ENCODE measurements at regions of chr2 and their contacts with region 1.

Region 1: DNA sequence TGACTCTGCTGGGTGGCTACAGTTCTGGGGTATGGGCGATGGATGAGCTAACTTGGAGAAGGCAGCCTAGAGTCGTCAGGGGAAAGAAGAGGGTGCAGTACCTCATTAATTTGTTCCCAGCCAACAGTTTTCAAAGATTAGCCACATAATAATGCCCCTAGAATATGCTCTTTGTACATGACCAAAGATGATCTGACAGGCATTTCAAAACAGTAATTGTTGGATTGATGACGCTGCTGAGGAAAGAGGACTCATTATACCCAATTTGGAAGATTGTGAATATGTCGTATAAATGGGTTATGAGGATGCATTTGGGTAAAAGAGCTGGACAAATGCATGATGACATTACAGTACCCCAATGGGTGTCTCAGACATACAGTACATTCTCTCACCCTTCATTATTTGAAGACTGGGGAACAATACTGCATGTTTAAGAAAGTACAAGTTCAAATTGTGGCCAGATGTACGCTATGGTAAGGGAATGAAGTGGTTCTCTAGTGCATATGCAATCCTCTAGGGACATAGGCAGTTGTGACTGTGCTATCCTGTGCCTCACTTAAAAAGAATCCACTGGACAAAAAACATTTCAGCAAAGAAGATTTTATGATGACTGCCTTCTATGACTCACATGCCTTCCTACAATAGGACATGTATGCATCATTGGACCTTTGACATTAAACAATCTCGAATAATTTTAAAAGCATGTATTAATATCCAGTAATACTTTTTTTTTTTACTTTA is 233.2 kb downstream of the CNTNAP5 start:
- DNase-seq: no peak
- H3K4me3 ChIP-seq: no peak overlapping the region
- H3K27ac ChIP-seq: no peak overlapping the region
- H3K4me1 ChIP-seq: no peaks in the 10 kb centered on the region
- H3K27me3 ChIP-seq: no peaks in the 10 kb centered on the region
- CTCF ChIP-seq: no peak
- EP300 ChIP-seq: no peak
- POLR2A ChIP-seq: no peak

Region 2: DNA sequence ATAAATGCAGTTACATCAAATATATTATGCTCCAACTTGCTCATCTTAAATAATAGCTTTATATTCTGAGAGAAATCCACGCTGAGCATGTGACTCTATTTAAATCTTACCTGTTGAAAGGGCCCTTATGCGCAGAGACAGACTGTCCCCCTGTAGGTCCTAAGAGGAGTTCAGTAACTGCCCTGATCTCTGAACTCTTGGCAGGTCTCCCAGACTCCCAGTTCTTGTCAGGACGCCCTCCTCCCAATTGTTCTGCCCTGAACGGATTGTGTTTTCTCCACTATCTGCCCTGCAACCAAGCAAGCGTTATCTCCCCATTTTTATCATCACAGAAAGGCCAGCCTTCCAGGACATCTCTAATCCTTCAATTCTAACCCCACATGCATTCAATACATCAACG is 1548.3 kb before region 1 on chr2:
- in situ Hi-C with region 1: no loop called
- intact Hi-C with region 1: loop called (anchors 5 kb)
- DNase-seq: no peak
- H3K4me3 ChIP-seq: no peak overlapping the region
- H3K27ac ChIP-seq: no peak overlapping the region
- H3K4me1 ChIP-seq: peaks cover 0 to 3% (median 0%) of the 10 kb centered on the region in 4 donors
- H3K27me3 ChIP-seq: no peaks in the 10 kb centered on the region
- CTCF ChIP-seq: no peak
- EP300 ChIP-seq: no peak
- POLR2A ChIP-seq: no peak

Region 3: DNA sequence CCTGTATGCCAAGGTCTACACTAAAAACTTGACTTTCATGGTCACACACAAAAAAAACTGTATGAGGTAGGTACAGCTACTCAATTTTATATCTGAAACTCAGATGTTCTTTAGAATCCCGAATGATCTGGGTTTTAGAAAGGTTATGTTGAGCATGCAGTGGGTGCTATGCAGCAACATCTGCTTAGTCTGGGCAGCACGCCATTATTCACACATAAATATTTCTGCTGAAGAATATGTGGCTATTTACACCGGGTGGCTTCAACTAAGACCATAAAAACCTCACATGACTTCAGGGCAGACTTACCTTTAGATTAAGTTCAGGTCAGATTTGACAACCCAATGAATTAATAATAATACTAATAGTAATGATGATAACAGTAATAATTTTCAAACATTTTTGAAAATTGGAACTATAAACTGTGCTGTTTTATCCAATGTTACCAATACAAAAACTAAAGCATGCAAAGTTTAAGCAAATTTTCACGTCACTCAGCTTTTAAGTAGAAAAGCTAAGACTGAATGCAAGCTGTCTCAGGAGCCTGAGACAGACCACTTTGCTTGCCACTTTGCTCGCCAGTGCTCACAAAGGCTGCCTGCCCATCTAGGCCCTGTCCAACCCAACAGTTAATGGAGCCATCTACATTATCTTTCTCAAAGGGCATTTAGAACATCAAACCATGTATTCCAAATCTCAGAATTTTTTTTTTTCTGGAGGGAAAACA is 58.7 kb after region 1 on chr2:
- in situ Hi-C with region 1: no loop called
- intact Hi-C with region 1: no loop called
- DNase-seq: no peak
- H3K4me3 ChIP-seq: no peak overlapping the region
- H3K27ac ChIP-seq: no peak overlapping the region
- H3K4me1 ChIP-seq: peaks cover 0 to 4% (median 0%) of the 10 kb centered on the region in 4 donors
- H3K27me3 ChIP-seq: no peaks in the 10 kb centered on the region
- CTCF ChIP-seq: no peak
- EP300 ChIP-seq: no peak
- POLR2A ChIP-seq: no peak

Measured in transverse colon (tissue), 4 donors.